PC-9 (cell line): ENCODE measurements at regions of chr1 and their contacts with region 1.

Region 1: GRCh38 chr1:112809253-112809684 is 94.1 kb upstream of the PPM1J start:
- DNase-seq: peak; percentile 49 to 79
- H3K4me3 ChIP-seq: no peak overlapping the region
- H3K27ac ChIP-seq: no peak overlapping the region
- H3K4me1 ChIP-seq: peaks cover 21% of the 10 kb centered on the region
- H3K27me3 ChIP-seq: no peaks in the 10 kb centered on the region
- CTCF ChIP-seq: peak; percentile 98

Region 2: GRCh38 chr1:112735752-112736151 is 73.5 kb before region 1 on chr1:
- CTCF ChIA-PET with region 1: no interaction called
- POLR2A ChIA-PET with region 1: no interaction called
- intact Hi-C with region 1: no loop called
- DNase-seq: peak; percentile 18 to 90
- H3K4me3 ChIP-seq: no peak overlapping the region
- H3K27ac ChIP-seq: peak overlapping the region; percentile 36
- H3K4me1 ChIP-seq: peaks cover 12% of the 10 kb centered on the region; the same call in 1 of the 2 replicates
- H3K27me3 ChIP-seq: no peaks in the 10 kb centered on the region
- CTCF ChIP-seq: no peak

Region 3: DNA sequence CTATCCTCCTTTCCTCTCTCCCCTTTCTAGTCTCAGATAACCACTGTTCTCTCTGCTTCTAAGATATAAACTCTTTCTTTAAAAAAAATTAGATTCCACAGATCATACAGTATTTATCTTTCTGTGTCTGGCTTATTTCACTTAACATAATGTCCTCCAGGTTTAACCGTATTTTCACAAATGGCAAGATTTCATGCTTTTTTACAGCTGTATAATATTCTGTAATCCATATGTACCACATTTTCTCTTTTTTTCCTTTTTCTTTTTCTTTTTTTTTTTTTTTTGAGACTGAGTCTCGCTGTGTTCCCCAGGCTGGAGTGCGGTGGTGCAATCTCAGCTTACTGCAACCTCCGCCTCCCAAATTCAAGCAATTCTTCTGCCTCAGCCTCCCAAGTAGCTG is 151.8 kb after region 1 on chr1:
- CTCF ChIA-PET with region 1: interaction called, 12 read pairs
- POLR2A ChIA-PET with region 1: no interaction called
- intact Hi-C with region 1: loop called (anchors 10 kb)
- DNase-seq: no peak
- H3K4me3 ChIP-seq: no peak overlapping the region
- H3K27ac ChIP-seq: no peak overlapping the region
- H3K4me1 ChIP-seq: peaks cover 13% of the 10 kb centered on the region
- H3K27me3 ChIP-seq: no peaks in the 10 kb centered on the region
- CTCF ChIP-seq: no peak

Region 4: DNA sequence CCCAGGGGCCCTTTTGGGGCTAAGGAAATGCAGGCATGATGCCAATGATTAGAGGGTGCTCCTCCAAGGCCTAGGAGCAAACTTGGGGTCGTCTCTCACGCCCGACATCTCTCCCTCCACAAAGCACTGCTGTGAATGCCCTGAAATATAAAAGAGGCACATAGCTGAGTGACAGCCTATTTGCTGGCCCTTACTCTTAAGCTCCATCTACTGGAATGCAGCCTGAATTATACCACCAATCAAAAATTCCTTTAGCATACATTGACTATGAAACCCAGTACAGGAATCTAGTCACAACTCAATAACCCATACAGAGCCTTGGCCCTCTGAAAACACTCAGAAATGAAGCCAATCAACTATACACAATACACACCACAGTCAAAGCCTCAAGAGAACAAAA is 369.3 kb after region 1 on chr1:
- CTCF ChIA-PET with region 1: no interaction called
- POLR2A ChIA-PET with region 1: no interaction called
- intact Hi-C with region 1: no loop called
- DNase-seq: no peak
- H3K4me3 ChIP-seq: no peak overlapping the region
- H3K27ac ChIP-seq: no peak overlapping the region
- H3K4me1 ChIP-seq: no peaks in the 10 kb centered on the region
- H3K27me3 ChIP-seq: no peaks in the 10 kb centered on the region
- CTCF ChIP-seq: no peak; the same call in 1 of the 2 replicates